Right lobe of liver (tissue), 6 donors: ENCODE measurements at regions of chr14 and their contacts with region 1.

Region 1: DNA sequence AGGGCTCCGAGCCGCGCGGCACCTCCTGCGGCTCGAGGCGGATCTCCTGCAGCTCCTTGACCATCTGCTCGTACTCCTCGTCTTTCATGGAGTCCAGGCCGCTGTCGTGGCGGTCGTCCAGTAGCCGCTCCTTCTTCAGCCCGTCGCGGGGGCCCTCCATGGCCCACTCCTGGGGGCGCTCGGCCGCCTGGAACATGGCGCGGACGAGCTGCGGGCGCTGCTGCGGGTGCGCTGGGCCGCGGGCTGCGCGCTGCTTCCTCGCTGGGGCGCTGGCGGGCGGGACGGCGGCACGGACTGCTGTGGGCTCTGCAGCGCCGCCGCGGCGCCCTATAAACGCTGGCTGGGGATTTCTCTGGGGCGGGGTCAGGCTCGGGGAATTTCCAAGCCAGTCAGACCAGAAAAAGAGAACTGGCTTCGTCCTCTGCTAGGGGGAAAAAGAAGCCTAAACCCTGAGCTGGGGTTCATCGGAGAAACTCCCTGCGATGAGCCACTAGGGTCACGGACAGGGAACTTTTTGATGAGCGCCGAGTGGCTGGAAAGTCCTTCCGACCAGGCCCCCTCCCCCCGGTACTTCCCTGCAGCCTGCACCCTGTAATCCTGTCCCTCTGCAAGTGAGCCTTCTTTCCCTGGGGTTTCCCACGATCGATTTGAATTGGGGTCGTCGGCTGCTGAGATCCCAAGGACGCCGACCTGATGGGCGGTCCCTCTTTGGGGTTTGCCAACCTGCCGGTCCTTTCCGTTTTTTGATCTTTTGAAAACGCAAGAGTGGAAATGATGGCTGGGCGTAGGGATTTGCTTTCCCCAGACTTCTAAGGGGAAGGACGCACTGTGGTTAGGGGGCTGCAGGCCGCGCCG is at the start of gene NFKBIA:
- DNase-seq: peak; percentile 93 to 95 (median 95)
- ATAC-seq: peak; percentile 52 to 76 (median 70)
- H3K4me3 ChIP-seq: peak within 1 kb of the TSS; percentile 72 to 81 (median 79)
- H3K27ac ChIP-seq: peak within 1 kb of the TSS; percentile 99 to 100 (median 99)
- H3K4me1 ChIP-seq: peaks cover 0 to 32% (median 7%) of the 10 kb centered on the region in 4 donors
- H3K27me3 ChIP-seq: no peaks in the 10 kb centered on the region
- CTCF ChIP-seq: peak; percentile 9 to 38 (median 25)
- POLR2A ChIP-seq: peak; percentile 99
- total RNA-seq, gene NFKBIA: 84.8 to 140 (median 106) TPM

Region 2: GRCh38 chr14:35336494-35337268 is 68.0 kb before region 1 on chr14:
- intact Hi-C with region 1: loop called (anchors 5 kb)
- DNase-seq: peak; percentile 96 to 99 (median 98)
- ATAC-seq: peak; percentile 67 to 80 (median 76)
- H3K4me3 ChIP-seq: peak overlapping the region in 1 of 3 donors; percentile 15
- H3K27ac ChIP-seq: peak overlapping the region; percentile 81 to 98 (median 96)
- H3K4me1 ChIP-seq: peaks cover 2 to 79% (median 37%) of the 10 kb centered on the region in 4 donors
- H3K27me3 ChIP-seq: no peaks in the 10 kb centered on the region
- CTCF ChIP-seq: no peak
- POLR2A ChIP-seq: peak; percentile 71